ENCODE measurements at regions of chr16 and their contacts with region 1.

Region 1: GRCh38 chr16:66740010-66740409 is 11.4 kb downstream of the DYNC1LI2 start:
- DNase-seq: peak; percentile 32
- ATAC-seq: peak; percentile 45
- H3K4me3 ChIP-seq: no peak overlapping the region
- H3K27ac ChIP-seq: no peak overlapping the region
- H3K4me1 ChIP-seq: peaks cover 14% of the 10 kb centered on the region
- H3K27me3 ChIP-seq: no peaks in the 10 kb centered on the region
- CTCF ChIP-seq: peak; percentile 58
- POLR2A ChIP-seq: no peak
- RAD21 ChIP-seq: no peak; the same call in 1 of the 2 replicates

Region 2: DNA sequence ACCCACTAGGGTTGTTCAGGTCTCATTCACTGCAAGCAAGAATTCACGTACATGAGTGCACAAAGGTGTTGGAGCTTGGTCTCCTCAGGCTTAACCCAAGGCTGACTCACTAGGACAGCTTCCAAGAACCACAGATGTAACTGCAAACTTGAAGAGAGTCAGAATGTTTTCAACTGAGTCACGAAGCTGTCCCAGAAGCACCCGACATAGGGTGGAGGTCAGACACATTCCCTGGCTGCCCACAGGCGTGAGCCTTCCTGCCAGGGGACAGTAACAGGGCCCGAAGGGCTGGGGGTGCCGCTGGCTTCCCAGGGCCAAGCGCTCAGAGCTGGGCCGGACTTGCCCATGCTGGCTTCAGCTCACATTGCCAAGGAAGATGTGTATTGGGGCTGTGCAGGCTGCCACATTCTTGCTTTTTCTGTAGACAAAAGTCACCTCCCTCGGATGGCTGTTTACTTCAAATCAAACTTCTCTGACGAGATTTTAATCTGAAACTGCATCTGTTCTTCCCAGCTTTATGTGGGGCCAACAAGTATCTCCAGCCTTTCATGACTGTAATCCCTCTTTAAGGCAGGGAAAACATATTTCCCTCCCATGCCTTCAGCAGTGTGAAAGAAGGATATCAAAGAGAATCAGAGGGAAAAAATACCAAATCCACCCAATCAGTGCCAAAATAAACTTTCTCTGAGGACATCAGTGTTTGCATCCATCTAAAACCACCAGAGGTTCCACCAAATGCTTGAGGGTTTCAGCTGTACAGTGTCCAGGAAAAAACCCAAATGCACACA is 121.2 kb before region 1 on chr16:
- CTCF ChIA-PET with region 1: no interaction called
- POLR2A ChIA-PET with region 1: interaction called, 11 read pairs
- dilution Hi-C with region 1: no loop called
- in situ Hi-C with region 1: no loop called
- intact Hi-C with region 1: no loop called
- DNase-seq: peak; percentile 98
- ATAC-seq: peak; percentile 90
- H3K4me3 ChIP-seq: no peak overlapping the region
- H3K27ac ChIP-seq: peak overlapping the region; percentile 62
- H3K4me1 ChIP-seq: peaks cover 37% of the 10 kb centered on the region
- H3K27me3 ChIP-seq: no peaks in the 10 kb centered on the region
- CTCF ChIP-seq: no peak
- POLR2A ChIP-seq: no peak
- RAD21 ChIP-seq: peak; percentile 4; the same call in 1 of the 2 replicates

Region 3: DNA sequence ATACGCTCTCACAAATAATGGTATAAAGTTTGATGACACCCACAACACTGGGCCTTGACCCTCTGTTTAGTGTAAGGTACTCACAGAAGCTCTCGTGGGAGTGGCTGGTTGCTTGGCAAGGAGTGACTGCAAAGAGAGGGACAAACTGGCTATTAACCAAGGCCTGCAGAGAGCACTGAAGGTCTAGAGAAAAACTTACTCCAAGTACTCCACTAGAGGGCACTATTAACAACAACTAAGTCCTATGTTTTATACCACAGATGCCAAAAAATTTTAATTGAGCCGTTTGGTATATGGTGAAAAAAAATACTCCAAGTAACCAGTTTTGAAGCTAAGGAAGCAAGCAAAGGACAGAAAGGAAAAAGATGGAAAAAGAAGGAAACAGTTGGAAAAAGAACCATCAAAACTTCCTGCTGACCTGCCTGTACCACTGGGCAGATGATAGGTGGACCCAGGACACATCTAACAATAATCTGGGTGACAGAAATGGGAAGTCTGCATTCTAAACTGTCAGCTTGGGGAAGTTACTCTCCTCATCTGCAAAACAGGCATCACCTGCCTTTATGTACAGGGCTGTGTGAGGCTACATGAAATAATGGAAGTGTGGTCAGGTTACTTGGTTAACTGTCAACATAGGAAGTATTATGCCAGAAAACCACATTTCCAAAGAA is 11.8 kb before region 1 on chr16:
- CTCF ChIA-PET with region 1: interaction called, 10 read pairs
- POLR2A ChIA-PET with region 1: no interaction called
- dilution Hi-C with region 1: no loop called
- in situ Hi-C with region 1: no loop called
- intact Hi-C with region 1: no loop called
- DNase-seq: peak; percentile 67
- ATAC-seq: peak; percentile 85
- H3K4me3 ChIP-seq: no peak overlapping the region
- H3K27ac ChIP-seq: no peak overlapping the region
- H3K4me1 ChIP-seq: no peaks in the 10 kb centered on the region; the same call in 1 of the 2 replicates
- H3K27me3 ChIP-seq: no peaks in the 10 kb centered on the region
- CTCF ChIP-seq: peak; percentile 59
- POLR2A ChIP-seq: no peak
- RAD21 ChIP-seq: peak; percentile 47